CD8-positive, alpha-beta T cell (primary cell): ENCODE measurements at regions of chr7 and their contacts with region 1.

Region 1: GRCh38 chr7:25259587-25260243 is 31.4 kb upstream of the NPVF start:
- DNase-seq: peak; percentile 24 to 83 (median 65)
- ATAC-seq: peak; percentile 83
- H3K4me3 ChIP-seq: no peak overlapping the region
- H3K4me3 Mint-ChIP-seq: peak overlapping the region; percentile 61
- H3K27ac ChIP-seq: no peak overlapping the region
- H3K27ac Mint-ChIP-seq: no peak overlapping the region
- H3K4me1 ChIP-seq: peaks cover 20% of the 10 kb centered on the region
- H3K4me1 Mint-ChIP-seq: peaks cover 25% of the 10 kb centered on the region
- H3K27me3 ChIP-seq: no peaks in the 10 kb centered on the region
- H3K27me3 Mint-ChIP-seq: peaks cover 3% of the 10 kb centered on the region
- CTCF ChIP-seq: peak; percentile 81

Region 2: GRCh38 chr7:25389489-25390106 is 129.9 kb after region 1 on chr7:
- CTCF ChIA-PET with region 1: interaction called, 69 read pairs
- POLR2A ChIA-PET with region 1: no interaction called
- intact Hi-C with region 1: loop called in 1 of 2 experiments (anchors 1 kb)
- DNase-seq: peak in 2 of 9 experiments; percentile 34 to 57
- ATAC-seq: no peak
- H3K4me3 ChIP-seq: no peak overlapping the region
- H3K4me3 Mint-ChIP-seq: no peak overlapping the region
- H3K27ac ChIP-seq: no peak overlapping the region
- H3K27ac Mint-ChIP-seq: no peak overlapping the region
- H3K4me1 ChIP-seq: no peaks in the 10 kb centered on the region
- H3K4me1 Mint-ChIP-seq: no peaks in the 10 kb centered on the region
- H3K27me3 ChIP-seq: no peaks in the 10 kb centered on the region
- H3K27me3 Mint-ChIP-seq: peaks cover 4% of the 10 kb centered on the region
- CTCF ChIP-seq: no peak

Region 3: GRCh38 chr7:25578991-25579777 is 319.5 kb after region 1 on chr7:
- CTCF ChIA-PET with region 1: interaction called, 10 read pairs
- POLR2A ChIA-PET with region 1: no interaction called
- intact Hi-C with region 1: no loop called
- DNase-seq: no peak
- ATAC-seq: no peak
- H3K4me3 ChIP-seq: no peak overlapping the region
- H3K4me3 Mint-ChIP-seq: no peak overlapping the region
- H3K27ac ChIP-seq: no peak overlapping the region
- H3K27ac Mint-ChIP-seq: no peak overlapping the region
- H3K4me1 ChIP-seq: no peaks in the 10 kb centered on the region
- H3K4me1 Mint-ChIP-seq: no peaks in the 10 kb centered on the region
- H3K27me3 ChIP-seq: no peaks in the 10 kb centered on the region
- H3K27me3 Mint-ChIP-seq: peaks cover 4% of the 10 kb centered on the region
- CTCF ChIP-seq: no peak